ENCODE measurements at regions of chr2 and their contacts with region 1.

Region 1: DNA sequence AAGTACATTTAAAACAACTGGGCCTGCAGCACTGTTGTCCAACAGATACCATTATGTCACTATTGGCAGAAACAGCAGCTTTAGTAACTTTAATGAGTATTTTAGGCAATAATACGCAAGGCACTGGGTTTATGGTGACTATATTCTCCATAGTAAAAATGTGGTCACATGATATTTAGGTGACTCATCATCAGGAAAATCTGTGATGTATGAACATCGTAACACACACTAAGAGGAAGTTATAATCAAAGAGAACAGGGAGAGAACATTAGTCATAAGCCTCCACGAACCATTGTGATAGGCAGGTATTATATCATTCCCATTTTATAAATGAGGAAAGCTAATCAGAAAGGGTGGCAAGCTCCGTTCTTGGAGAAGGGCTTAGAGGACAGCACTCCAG is 36.9 kb downstream of the RAPH1 start:
- DNase-seq: no peak
- ATAC-seq: peak in 1 of 2 donors; percentile 19
- H3K4me3 ChIP-seq: no peak overlapping the region
- H3K27ac ChIP-seq: no peak overlapping the region
- H3K4me1 ChIP-seq: peaks cover 0 to 25% of the 10 kb centered on the region in 2 donors
- H3K27me3 ChIP-seq: no peaks in the 10 kb centered on the region
- CTCF ChIP-seq: no peak
- POLR2A ChIP-seq: no peak

Region 2: DNA sequence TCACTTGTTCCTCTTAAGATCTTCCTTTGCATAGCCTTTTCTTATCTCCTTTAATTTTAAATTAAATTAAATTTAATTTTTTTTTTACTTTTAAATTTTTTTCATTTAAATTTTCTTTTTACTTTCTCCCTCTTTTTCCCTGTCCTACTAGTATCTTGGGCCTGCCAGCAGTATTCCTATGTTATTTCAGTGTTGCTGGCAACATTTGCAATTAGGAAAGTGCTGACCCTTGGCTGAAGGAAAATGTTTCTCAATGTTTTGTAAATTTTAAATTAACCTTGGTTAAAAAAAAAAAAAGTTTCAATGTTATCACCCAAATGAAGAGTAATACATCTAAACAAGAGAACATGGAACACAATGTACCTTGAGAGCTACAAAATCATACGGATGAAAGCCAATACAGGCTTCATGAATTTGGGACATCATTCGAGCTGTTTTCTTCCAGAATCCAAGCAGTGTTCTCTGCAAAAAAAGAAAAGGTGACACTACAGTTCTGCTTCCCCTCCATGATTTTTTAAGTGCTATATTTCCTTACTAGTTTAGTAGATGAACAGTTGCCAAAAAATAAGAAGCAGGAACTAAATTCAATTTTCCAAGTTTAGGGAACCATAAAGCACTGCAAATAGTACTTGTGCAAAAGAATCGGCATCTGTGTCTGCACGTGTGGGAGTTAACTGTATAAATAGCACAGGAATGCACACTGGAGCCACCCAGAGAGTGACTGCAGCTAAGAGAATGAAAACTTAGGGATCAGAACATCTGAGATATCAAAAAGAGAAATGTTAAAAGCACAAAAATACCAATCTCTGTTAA is 682.4 kb before region 1 on chr2:
- in situ Hi-C with region 1: no loop called
- intact Hi-C with region 1: no loop called
- DNase-seq: no peak
- ATAC-seq: peak; percentile 70 to 81
- H3K4me3 ChIP-seq: no peak overlapping the region
- H3K27ac ChIP-seq: peak overlapping the region; percentile 42 to 65 (median 54)
- H3K4me1 ChIP-seq: peaks cover 11 to 12% of the 10 kb centered on the region in 2 donors
- H3K27me3 ChIP-seq: no peaks in the 10 kb centered on the region
- CTCF ChIP-seq: no peak
- POLR2A ChIP-seq: no peak

Region 3: GRCh38 chr2:203683932-203684556 is 185.9 kb after region 1 on chr2:
- in situ Hi-C with region 1: no loop called
- intact Hi-C with region 1: no loop called
- DNase-seq: peak in 1 of 2 donors; percentile 52
- ATAC-seq: peak; percentile 28 to 51
- H3K4me3 ChIP-seq: no peak overlapping the region
- H3K27ac ChIP-seq: peak overlapping the region; percentile 71 to 79 (median 76)
- H3K4me1 ChIP-seq: peaks cover 56 to 70% of the 10 kb centered on the region in 2 donors
- H3K27me3 ChIP-seq: no peaks in the 10 kb centered on the region
- CTCF ChIP-seq: no peak
- POLR2A ChIP-seq: no peak

Region 4: DNA sequence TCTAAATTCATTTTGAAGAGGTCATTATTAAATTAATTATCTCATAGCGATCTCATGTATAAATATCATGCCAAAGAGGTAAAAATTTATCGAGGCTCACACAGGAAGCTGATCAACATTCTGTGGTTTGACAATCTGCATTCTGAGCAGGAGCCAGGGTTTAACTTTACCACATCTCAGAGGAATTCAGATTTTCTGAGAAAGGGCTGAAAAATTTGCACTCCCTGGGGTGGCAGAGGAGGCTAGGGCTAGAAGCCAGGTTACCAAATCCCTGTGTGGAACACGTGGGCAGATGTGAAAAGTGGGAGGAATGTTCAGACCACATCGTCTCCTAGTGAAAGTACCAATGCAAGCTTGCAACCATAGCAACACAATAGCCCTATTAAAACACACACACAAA is 305.9 kb after region 1 on chr2:
- in situ Hi-C with region 1: loop called in 2 of 4 experiments (anchors 10 to 25 kb)
- intact Hi-C with region 1: no loop called
- DNase-seq: peak in 1 of 2 donors; percentile 21
- ATAC-seq: peak; percentile 34 to 53
- H3K4me3 ChIP-seq: no peak overlapping the region
- H3K27ac ChIP-seq: no peak overlapping the region
- H3K4me1 ChIP-seq: peaks cover 0 to 9% of the 10 kb centered on the region in 2 donors
- H3K27me3 ChIP-seq: no peaks in the 10 kb centered on the region
- CTCF ChIP-seq: no peak
- POLR2A ChIP-seq: no peak

Region 5: GRCh38 chr2:204049635-204050034 is 551.5 kb after region 1 on chr2:
- in situ Hi-C with region 1: no loop called
- intact Hi-C with region 1: no loop called
- DNase-seq: no peak
- ATAC-seq: no peak
- H3K4me3 ChIP-seq: no peak overlapping the region
- H3K27ac ChIP-seq: no peak overlapping the region
- H3K4me1 ChIP-seq: no peaks in the 10 kb centered on the region
- H3K27me3 ChIP-seq: no peaks in the 10 kb centered on the region
- CTCF ChIP-seq: no peak
- POLR2A ChIP-seq: no peak

Measured in gastrocnemius medialis (tissue), 4 donors.